Spleen (tissue), 13 donors: ENCODE measurements at regions of chr11 and their contacts with region 1.

Region 1: GRCh38 chr11:114762408-114762807 is 84.1 kb downstream of the NXPE2 start:
- DNase-seq: no peak
- H3K4me3 ChIP-seq: no peak overlapping the region
- H3K27ac ChIP-seq: no peak overlapping the region
- H3K4me1 ChIP-seq: no peaks in the 10 kb centered on the region
- H3K27me3 ChIP-seq: no peaks in the 10 kb centered on the region
- CTCF ChIP-seq: peak in 10 of 11 experiments; percentile 23 to 71 (median 56)
- POLR2A ChIP-seq: no peak

Region 2: GRCh38 chr11:114340311-114341131 is 421.9 kb before region 1 on chr11:
- intact Hi-C with region 1: loop called (anchors 10 kb)
- DNase-seq: peak; percentile 72
- H3K4me3 ChIP-seq: peak overlapping the region in 4 of 8 donors; percentile 8 to 56 (median 22)
- H3K27ac ChIP-seq: peak overlapping the region; percentile 30 to 78 (median 72)
- H3K4me1 ChIP-seq: peaks cover 0 to 21% (median 12%) of the 10 kb centered on the region in 6 donors
- H3K27me3 ChIP-seq: peaks cover 0 to 5% (median 0%) of the 10 kb centered on the region in 7 donors
- CTCF ChIP-seq: peak; percentile 2 to 74 (median 66)
- POLR2A ChIP-seq: no peak

Region 3: GRCh38 chr11:114664641-114665040 is 97.8 kb before region 1 on chr11:
- intact Hi-C with region 1: no loop called
- DNase-seq: no peak
- H3K4me3 ChIP-seq: no peak overlapping the region
- H3K27ac ChIP-seq: no peak overlapping the region
- H3K4me1 ChIP-seq: no peaks in the 10 kb centered on the region
- H3K27me3 ChIP-seq: no peaks in the 10 kb centered on the region
- CTCF ChIP-seq: no peak
- POLR2A ChIP-seq: no peak

Region 4: DNA sequence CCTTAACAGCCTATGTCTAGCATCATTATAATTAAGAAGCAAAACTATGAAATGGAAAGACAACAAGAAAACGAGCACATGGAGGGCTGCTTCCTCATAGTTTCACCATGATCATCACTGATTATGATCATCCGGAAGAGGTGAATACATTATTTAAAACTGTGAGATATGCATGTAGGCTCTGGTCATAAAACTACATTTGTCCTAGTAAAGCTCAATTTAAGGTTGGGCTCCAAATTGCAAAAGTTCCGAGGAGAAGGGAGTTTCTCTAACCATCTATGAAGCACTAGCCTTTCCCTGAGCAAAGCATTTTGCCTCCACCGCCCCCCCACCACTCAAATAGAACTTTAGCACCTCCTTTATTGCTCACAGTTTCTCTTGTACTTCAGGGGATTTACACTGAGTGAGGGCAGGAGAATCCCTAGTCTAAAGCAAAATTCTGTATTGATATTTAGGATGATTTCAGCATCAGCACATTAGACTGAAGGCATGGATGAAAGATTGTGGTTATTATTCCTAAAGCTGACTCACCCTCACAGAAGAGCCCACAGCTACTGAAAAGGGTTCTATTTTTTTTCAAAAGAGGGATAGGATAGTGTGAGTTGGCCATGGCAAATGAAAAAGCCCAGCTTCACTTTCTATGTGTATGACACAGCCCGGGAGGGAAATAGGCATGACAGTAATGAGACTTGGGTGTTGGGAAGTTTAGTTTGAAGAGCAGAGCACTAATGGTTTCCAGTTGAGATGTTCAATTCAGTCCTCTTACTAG is 538.4 kb after region 1 on chr11:
- intact Hi-C with region 1: no loop called
- DNase-seq: no peak
- H3K4me3 ChIP-seq: no peak overlapping the region
- H3K27ac ChIP-seq: no peak overlapping the region
- H3K4me1 ChIP-seq: no peaks in the 10 kb centered on the region
- H3K27me3 ChIP-seq: peaks cover 0 to 4% (median 0%) of the 10 kb centered on the region in 7 donors
- CTCF ChIP-seq: no peak
- POLR2A ChIP-seq: no peak